Activated B cell treated with CpG ODN at 0.5 μM for 24 hours (primary cell): ENCODE measurements at regions of chr10 and their contacts with region 1.

Region 1: DNA sequence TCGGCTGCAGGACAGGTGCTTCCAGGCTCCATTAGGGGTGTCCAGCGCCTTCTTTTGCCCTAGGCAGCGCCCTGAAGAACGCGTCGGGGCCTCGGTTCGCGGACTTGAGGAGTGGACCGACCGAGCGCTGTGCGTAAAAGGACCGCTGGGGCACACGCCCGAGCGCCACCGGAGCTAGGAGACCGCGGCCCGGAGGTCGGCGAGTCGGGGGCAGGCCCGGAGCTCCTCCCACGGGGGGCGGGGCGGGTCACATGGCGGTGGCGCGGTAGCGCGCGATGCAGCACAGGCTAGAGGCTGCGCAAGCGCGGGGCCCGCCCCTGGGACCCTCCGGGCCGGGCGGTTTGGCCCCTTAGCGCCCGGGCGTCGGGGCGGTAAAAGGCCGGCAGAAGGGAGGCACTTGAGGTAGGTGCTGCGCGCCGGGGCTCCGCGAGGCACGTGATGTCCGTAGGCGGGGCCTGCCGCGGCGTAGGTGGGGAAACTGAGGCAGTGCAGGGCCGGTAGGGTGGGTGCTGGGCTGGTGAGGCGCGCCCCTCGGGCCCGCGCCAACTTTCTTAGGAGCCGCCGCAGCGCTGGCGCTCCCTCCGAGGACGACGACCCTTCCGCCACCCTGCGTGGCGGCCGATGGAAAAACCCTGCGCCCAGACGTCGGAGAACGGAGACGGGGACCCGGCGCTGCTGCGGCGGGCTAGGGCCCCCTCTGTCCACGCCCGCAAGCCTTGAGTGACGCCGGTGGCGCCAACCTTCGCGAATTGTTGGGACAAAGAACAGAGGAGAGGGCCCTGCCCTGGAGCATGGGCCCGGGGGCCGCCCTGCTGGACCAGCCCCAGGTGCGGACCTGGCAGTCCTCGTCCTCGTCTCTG is at the start of gene PRXL2A:
- DNase-seq: peak; percentile 87
- ATAC-seq: peak; percentile 97
- H3K4me3 Mint-ChIP-seq: peak within 1 kb of the TSS; percentile 91
- H3K27ac Mint-ChIP-seq: peak within 1 kb of the TSS; percentile 82
- H3K4me1 Mint-ChIP-seq: peaks cover 12% of the 10 kb centered on the region
- H3K27me3 Mint-ChIP-seq: peaks cover 2% of the 10 kb centered on the region
- CTCF ChIP-seq: no peak
- total RNA-seq, gene PRXL2A: 8.5 and 10.3 TPM in 2 replicates

Region 2: GRCh38 chr10:80421707-80422536 is 13.4 kb after region 1 on chr10:
- CTCF ChIA-PET with region 1: interaction called, 7 read pairs
- POLR2A ChIA-PET with region 1: interaction called, 17 read pairs
- intact Hi-C with region 1: loop called (anchors 1 kb)
- DNase-seq: no peak
- ATAC-seq: peak; percentile 82
- H3K4me3 Mint-ChIP-seq: peak overlapping the region; percentile 24
- H3K27ac Mint-ChIP-seq: peak overlapping the region; percentile 10
- H3K4me1 Mint-ChIP-seq: peaks cover 32% of the 10 kb centered on the region
- H3K27me3 Mint-ChIP-seq: no peaks in the 10 kb centered on the region
- CTCF ChIP-seq: no peak

Region 3: DNA sequence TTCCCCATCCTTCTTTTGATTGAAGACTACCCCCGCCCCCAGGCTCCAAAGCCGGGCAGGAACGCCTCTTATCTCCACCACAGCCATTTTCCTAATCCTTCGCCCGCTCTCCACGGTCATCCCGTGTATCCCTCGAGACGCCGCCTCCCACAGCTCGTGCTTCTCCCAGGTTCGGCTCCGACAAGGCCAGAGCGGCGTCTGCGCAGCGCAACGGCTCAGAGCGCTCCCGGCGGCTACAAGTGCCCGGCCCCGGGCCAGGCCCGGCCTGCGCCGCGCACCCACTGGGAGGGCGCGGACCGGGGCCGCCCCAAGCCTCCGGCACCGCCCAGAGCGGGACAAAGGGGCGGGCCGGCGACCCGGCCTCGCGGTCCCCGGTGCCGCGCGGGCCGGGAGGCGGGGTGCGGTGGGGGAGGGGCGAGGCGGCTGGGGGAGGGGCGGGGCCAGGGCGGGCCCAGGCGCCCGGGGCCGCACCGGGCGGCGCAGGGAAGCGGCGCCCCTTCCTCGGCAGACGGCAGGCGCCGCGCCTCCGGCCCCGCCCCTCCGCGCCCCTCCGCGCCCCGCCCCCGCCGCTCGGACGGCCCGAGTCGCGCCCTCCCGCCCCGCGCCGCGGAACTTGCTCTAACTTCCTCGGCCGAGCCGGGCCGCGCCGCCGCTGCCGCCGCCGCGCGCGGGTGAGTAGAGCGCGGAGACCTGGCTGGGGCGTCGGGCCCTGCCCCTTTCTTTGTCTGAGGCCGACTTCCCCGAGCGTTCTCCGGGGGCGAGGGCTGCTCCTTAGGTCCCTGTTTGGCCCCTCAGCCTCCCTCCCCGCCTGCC is 45.4 kb after region 1 on chr10 and contains the start of gene TSPAN14:
- CTCF ChIA-PET with region 1: no interaction called
- POLR2A ChIA-PET with region 1: interaction called, 4 read pairs
- intact Hi-C with region 1: loop called (anchors 1 kb)
- DNase-seq: peak; percentile 73
- ATAC-seq: peak; percentile 77
- H3K4me3 Mint-ChIP-seq: peak within 1 kb of the TSS; percentile 95
- H3K27ac Mint-ChIP-seq: peak within 1 kb of the TSS; percentile 89
- H3K4me1 Mint-ChIP-seq: peaks cover 50% of the 10 kb centered on the region
- H3K27me3 Mint-ChIP-seq: no peaks in the 10 kb centered on the region
- CTCF ChIP-seq: no peak
- total RNA-seq, gene TSPAN14: 18.9 and 20.7 TPM in 2 replicates